HCT116 (cell line): ENCODE measurements at regions of chr18 and their contacts with region 1.

Region 1: DNA sequence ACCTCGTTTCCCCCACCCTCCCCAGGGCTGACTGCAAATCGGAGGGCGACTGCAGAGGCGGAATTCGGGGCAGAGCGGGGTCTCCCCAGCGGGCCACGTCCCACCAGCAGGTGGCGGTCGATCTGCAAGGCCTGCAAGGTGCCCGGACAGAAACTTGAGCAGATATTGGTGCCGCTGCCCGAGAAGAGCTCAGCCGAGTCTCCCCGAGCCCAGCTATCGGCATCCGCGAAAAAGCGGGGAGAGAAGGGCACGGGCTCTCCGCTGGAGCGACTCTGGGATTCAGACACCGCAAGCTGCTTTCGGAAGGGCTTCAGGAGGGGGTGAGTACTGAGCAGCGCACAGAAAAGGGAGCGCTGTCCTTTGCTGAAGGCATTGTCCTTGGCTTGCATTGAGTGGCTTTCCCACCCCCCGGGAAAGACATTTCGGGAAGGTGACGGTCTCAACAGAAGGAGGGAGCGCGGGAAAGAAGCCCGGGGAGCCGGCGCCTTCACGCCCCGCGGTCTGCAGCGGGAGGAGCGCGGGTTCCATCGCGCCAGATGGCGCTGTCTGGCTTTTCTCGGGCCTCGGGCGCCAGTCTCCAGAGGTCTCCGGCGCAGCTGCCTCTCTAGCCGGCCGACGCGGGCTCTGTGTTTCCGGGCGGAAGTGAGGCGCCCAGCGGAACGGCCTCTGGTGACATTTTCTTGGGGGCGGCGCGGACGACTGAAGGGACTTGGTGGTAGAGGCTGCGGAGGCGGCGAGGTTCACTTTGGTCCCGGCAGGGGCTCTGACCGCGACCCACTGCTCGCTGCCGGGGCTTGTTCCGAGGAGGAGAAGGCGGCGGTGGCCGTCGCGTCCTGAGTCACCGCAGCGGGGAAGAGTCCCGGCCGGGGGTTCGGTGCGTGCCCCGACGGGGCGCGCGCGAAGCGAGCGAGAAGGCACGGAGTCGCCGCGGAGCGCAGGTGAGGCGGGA is 69.5 kb downstream of the HAUS1 start:
- DNase-seq: peak; percentile 82
- ATAC-seq: peak; percentile 92
- H3K4me3 ChIP-seq: peak overlapping the region; percentile 90 to 94
- H3K27ac ChIP-seq: peak overlapping the region; percentile 83
- H3K4me1 ChIP-seq: peaks cover 14 to 44% of the 10 kb centered on the region in 2 experiments
- H3K27me3 ChIP-seq: no peaks in the 10 kb centered on the region
- CTCF ChIP-seq: peak; percentile 83 to 95 (median 87)
- POLR2A ChIP-seq: peak; percentile 69
- RAD21 ChIP-seq: peak; percentile 70

Region 2: DNA sequence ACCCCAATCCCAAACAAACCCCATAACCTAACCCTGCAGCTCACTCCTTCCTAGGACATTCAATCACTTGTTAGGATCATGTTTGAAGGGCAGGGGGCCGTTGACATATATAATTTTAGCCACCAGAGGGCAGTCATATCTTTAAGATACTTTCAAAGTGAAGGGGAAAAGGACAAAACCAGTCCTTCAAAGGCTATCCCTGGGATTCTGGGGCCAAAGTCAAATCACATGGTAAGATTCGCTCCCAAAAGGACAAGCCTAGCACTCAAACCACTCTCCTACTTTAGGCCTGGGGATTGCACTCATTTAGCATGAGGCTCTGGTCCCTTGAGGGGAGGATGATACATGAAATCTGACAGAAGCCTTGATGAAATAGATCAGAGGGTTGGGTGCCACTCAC is 24.9 kb before region 1 on chr18:
- CTCF ChIA-PET with region 1: interaction called, 25 read pairs
- POLR2A ChIA-PET with region 1: interaction called, 8 read pairs
- RAD21 ChIA-PET with region 1: no interaction called
- intact Hi-C with region 1: loop called (anchors 2 kb)
- DNase-seq: no peak
- ATAC-seq: peak; percentile 65
- H3K4me3 ChIP-seq: no peak overlapping the region
- H3K27ac ChIP-seq: no peak overlapping the region
- H3K4me1 ChIP-seq: peaks cover 20 to 28% of the 10 kb centered on the region in 2 experiments
- H3K27me3 ChIP-seq: no peaks in the 10 kb centered on the region
- CTCF ChIP-seq: peak; percentile 57 to 85 (median 78)
- POLR2A ChIP-seq: no peak
- RAD21 ChIP-seq: peak; percentile 85

Region 3: DNA sequence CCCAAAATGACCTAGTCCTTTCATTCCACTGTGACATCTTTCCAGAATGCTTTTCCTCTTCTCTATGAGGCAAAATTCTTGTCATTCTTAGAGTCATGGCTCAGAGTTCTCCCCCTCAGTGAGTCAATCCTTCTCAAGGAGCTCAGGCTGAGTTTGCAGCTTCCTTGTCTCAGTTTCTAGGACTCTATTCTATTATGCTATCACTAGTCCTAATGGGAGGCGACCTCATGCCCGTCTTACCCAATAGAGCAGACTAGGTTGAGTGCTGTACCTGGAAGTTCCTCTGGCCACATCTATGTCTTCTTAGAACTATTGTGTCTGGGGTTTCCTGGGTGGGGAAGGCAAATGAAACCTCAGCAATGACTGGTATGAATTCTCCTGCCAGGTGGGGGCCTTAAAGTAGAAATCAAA is 18.0 kb before region 1 on chr18:
- CTCF ChIA-PET with region 1: interaction called, 25 read pairs
- POLR2A ChIA-PET with region 1: interaction called, 8 read pairs
- RAD21 ChIA-PET with region 1: no interaction called
- intact Hi-C with region 1: loop called (anchors 2 kb)
- DNase-seq: no peak
- ATAC-seq: peak; percentile 66
- H3K4me3 ChIP-seq: peak overlapping the region in 1 of 2 experiments; percentile 33; a peak in 2 of 4 replicates
- H3K27ac ChIP-seq: peak overlapping the region; percentile 16; the same call in 1 of the 2 replicates
- H3K4me1 ChIP-seq: peaks cover 31 to 53% of the 10 kb centered on the region in 2 experiments
- H3K27me3 ChIP-seq: no peaks in the 10 kb centered on the region
- CTCF ChIP-seq: no peak
- POLR2A ChIP-seq: no peak
- RAD21 ChIP-seq: no peak

Region 4: DNA sequence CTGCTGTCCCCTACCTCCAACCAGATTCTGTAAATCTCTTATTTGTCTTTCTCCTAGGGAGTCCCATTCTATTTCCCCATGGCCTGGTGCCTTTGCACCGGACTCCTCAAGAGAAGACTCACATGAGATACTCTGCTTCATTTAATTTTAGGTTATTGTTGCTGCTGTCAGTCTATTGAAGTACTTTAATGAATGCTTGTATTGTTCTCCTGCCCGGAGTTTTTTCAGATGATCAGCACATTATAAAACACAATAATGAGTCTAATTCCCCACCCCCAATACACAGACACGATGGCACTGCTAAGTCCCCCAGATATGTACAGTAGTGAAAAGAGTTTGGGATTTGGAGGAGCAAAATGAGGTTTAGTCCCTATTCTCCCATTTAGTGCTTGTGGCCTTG is 10.6 kb before region 1 on chr18:
- CTCF ChIA-PET with region 1: interaction called, 17 read pairs
- POLR2A ChIA-PET with region 1: interaction called, 10 read pairs
- RAD21 ChIA-PET with region 1: no interaction called
- intact Hi-C with region 1: no loop called
- DNase-seq: no peak
- ATAC-seq: no peak
- H3K4me3 ChIP-seq: no peak overlapping the region
- H3K27ac ChIP-seq: no peak overlapping the region
- H3K4me1 ChIP-seq: peaks cover 0 to 6% of the 10 kb centered on the region in 2 experiments; a peak in 1 of 4 replicates
- H3K27me3 ChIP-seq: no peaks in the 10 kb centered on the region
- CTCF ChIP-seq: no peak
- POLR2A ChIP-seq: no peak
- RAD21 ChIP-seq: no peak

Region 5: DNA sequence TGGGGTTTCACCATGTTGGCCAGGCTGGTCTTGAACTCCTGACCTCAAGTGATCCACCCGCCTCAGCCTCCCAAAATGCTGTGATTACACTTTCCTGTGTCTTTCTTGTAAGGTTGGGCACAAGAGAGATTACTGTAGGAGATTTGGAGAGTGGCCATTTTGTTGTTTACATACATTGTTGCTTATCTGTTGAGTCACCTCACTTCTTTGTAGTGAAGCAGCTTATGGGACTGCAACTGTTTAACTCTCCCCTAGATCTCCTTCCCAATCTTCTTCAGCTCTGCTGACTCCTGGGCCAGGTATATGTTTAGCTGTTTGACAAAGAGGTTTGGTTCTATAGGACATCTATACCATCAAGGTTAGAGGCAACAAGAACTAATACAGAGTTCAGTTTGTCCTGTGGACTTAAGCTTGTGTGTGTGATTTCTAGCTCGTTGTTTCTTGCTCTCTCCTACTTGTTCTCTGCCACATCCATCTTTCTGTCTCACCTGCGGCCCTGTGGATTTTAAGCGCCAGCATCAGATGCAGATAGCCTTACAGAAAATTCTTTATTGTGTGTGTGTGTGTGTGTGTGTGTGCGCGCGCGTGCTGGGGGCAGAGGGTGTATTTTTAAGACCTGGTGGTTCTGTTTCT is 26.0 kb after region 1 on chr18:
- CTCF ChIA-PET with region 1: interaction called, 10 read pairs
- POLR2A ChIA-PET with region 1: interaction called, 4 read pairs
- RAD21 ChIA-PET with region 1: interaction called in 1 of 2 experiments, 3 read pairs
- intact Hi-C with region 1: no loop called
- DNase-seq: peak; percentile 16
- ATAC-seq: peak; percentile 68
- H3K4me3 ChIP-seq: no peak overlapping the region
- H3K27ac ChIP-seq: peak overlapping the region; percentile 12
- H3K4me1 ChIP-seq: peaks cover 28 to 55% of the 10 kb centered on the region in 2 experiments
- H3K27me3 ChIP-seq: no peaks in the 10 kb centered on the region
- CTCF ChIP-seq: no peak
- POLR2A ChIP-seq: no peak
- RAD21 ChIP-seq: no peak

Region 6: GRCh38 chr18:46213295-46213694 is 39.6 kb after region 1 on chr18:
- CTCF ChIA-PET with region 1: interaction called, 23 read pairs
- POLR2A ChIA-PET with region 1: no interaction called
- RAD21 ChIA-PET with region 1: interaction called in 1 of 2 experiments, 5 read pairs
- intact Hi-C with region 1: loop called (anchors 1 kb)
- DNase-seq: peak; percentile 21
- ATAC-seq: peak; percentile 52; the same call in 1 of the 2 replicates
- H3K4me3 ChIP-seq: no peak overlapping the region
- H3K27ac ChIP-seq: no peak overlapping the region
- H3K4me1 ChIP-seq: no peaks in the 10 kb centered on the region
- H3K27me3 ChIP-seq: no peaks in the 10 kb centered on the region
- CTCF ChIP-seq: peak; percentile 45 to 76 (median 65)
- POLR2A ChIP-seq: no peak
- RAD21 ChIP-seq: peak; percentile 69

Region 7: DNA sequence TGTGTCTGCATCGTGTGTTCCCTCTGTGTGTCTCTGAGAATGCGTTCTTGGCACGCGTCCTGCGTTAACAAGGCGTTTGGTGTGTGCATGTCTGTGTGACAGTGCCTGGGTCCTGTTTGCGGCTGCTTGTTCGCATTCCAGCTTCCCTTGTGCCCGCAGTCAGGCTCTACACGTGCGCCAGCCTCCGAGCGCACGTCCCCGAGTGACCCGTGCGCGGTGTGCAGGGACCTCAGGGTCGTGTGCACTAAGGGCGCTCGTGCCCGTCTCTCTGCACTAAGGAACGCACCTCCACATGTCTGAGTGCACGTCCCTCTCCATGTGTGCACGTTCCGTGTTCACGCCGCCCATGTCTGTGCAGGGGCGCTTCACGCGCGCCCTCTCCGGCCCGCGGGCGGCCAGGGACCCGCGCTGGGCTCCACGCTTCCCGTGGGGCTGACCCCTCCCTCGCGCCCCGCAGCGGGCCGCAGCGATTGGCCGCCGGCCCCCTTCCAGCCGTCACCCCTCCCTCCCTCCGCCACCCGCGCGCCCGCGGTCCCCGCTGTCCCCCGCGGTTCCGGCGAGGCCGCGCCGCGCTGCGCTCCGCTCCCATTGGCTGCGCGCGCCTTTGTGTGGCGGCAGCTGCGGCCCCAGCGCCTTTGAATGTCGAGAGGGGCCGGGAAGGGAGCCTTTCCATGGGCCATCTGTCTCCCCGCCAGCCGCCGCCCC is 159.9 kb after region 1 on chr18:
- CTCF ChIA-PET with region 1: no interaction called
- POLR2A ChIA-PET with region 1: no interaction called
- RAD21 ChIA-PET with region 1: no interaction called
- intact Hi-C with region 1: loop called (anchors 5 kb)
- DNase-seq: peak; percentile 22
- ATAC-seq: peak; percentile 86
- H3K4me3 ChIP-seq: peak overlapping the region; percentile 61 to 71
- H3K27ac ChIP-seq: peak overlapping the region; percentile 31; the same call in 1 of the 2 replicates
- H3K4me1 ChIP-seq: peaks cover 4 to 23% of the 10 kb centered on the region in 2 experiments; a peak in 3 of 4 replicates
- H3K27me3 ChIP-seq: no peaks in the 10 kb centered on the region
- CTCF ChIP-seq: no peak
- POLR2A ChIP-seq: no peak
- RAD21 ChIP-seq: no peak